Mammary epithelial cell (primary cell): ENCODE measurements at regions of chr9 and their contacts with region 1.

Region 1: GRCh38 chr9:69771775-69772418 is 12.1 kb upstream of the PTAR1 start:
- DNase-seq: no peak
- H3K4me3 ChIP-seq: no peak overlapping the region
- H3K27ac ChIP-seq: no peak overlapping the region
- H3K4me1 ChIP-seq: no peaks in the 10 kb centered on the region
- H3K27me3 ChIP-seq: no peaks in the 10 kb centered on the region
- CTCF ChIP-seq: no peak

Region 2: DNA sequence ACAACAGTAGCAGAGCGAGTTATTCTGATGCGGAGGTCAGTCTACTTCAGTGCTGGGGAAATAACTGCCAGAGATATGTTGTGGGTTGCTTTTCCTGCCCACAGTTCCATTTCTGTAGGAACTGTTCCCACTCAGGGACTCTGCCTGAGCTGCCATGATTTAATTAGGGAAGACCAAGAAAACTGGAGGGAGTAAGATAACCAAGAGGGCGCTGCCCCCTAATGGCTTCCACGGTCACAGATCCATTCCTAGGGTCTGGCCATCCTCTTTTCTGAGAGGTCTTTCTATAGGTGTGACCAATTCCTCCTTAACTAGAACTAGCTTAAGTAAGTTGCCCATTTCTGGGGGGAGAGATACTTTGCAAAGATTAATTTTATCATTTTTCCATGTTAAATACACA is 225.6 kb before region 1 on chr9:
- CTCF ChIA-PET with region 1: no interaction called
- dilution Hi-C with region 1: no loop called
- in situ Hi-C with region 1: no loop called
- intact Hi-C with region 1: no loop called
- DNase-seq: no peak
- H3K4me3 ChIP-seq: no peak overlapping the region
- H3K27ac ChIP-seq: no peak overlapping the region
- H3K4me1 ChIP-seq: no peaks in the 10 kb centered on the region
- H3K27me3 ChIP-seq: peaks cover 11% of the 10 kb centered on the region
- CTCF ChIP-seq: peak; percentile 19 to 39

Region 3: GRCh38 chr9:69740872-69741505 is 30.9 kb before region 1 on chr9:
- CTCF ChIA-PET with region 1: no interaction called
- dilution Hi-C with region 1: no loop called
- in situ Hi-C with region 1: no loop called
- intact Hi-C with region 1: no loop called
- DNase-seq: no peak
- H3K4me3 ChIP-seq: no peak overlapping the region
- H3K27ac ChIP-seq: no peak overlapping the region
- H3K4me1 ChIP-seq: peaks cover 4% of the 10 kb centered on the region
- H3K27me3 ChIP-seq: no peaks in the 10 kb centered on the region
- CTCF ChIP-seq: no peak

Region 4: GRCh38 chr9:69861005-69861404 is 89.1 kb after region 1 on chr9:
- CTCF ChIA-PET with region 1: interaction called, 26 read pairs
- dilution Hi-C with region 1: no loop called
- in situ Hi-C with region 1: no loop called
- intact Hi-C with region 1: no loop called
- DNase-seq: no peak
- H3K4me3 ChIP-seq: no peak overlapping the region
- H3K27ac ChIP-seq: no peak overlapping the region
- H3K4me1 ChIP-seq: peaks cover 16% of the 10 kb centered on the region
- H3K27me3 ChIP-seq: no peaks in the 10 kb centered on the region
- CTCF ChIP-seq: no peak

Region 5: DNA sequence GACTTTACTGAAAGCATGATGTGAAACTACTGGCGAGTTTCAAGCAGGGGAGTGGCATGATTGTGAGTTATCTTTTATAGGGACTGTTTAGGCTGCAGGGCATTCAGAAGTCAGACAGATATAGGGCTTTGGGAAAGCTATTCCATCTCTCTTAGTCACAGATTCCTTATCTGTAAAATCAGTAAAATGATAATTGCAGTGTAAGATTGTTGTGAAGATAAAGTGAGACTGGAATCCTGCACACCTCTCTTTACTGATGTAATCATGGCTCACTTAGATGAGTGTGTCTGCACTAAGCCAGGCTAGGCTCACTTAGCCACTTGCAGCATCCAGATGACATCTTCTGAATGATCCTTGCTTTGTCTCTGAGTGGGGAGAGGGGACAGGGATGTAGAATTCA is 189.9 kb after region 1 on chr9:
- CTCF ChIA-PET with region 1: no interaction called
- dilution Hi-C with region 1: no loop called
- in situ Hi-C with region 1: no loop called
- intact Hi-C with region 1: no loop called
- DNase-seq: peak; percentile 48
- H3K4me3 ChIP-seq: no peak overlapping the region
- H3K27ac ChIP-seq: no peak overlapping the region
- H3K4me1 ChIP-seq: peaks cover 7% of the 10 kb centered on the region
- H3K27me3 ChIP-seq: no peaks in the 10 kb centered on the region
- CTCF ChIP-seq: no peak

Region 6: GRCh38 chr9:70374962-70375618 is 603.2 kb after region 1 on chr9:
- CTCF ChIA-PET with region 1: no interaction called
- dilution Hi-C with region 1: no loop called
- in situ Hi-C with region 1: no loop called
- intact Hi-C with region 1: no loop called
- DNase-seq: no peak
- H3K4me3 ChIP-seq: no peak overlapping the region
- H3K27ac ChIP-seq: no peak overlapping the region
- H3K4me1 ChIP-seq: no peaks in the 10 kb centered on the region
- H3K27me3 ChIP-seq: no peaks in the 10 kb centered on the region
- CTCF ChIP-seq: no peak